CD14-positive monocyte (primary cell): ENCODE measurements at regions of chr15 and their contacts with region 1.

Region 1: DNA sequence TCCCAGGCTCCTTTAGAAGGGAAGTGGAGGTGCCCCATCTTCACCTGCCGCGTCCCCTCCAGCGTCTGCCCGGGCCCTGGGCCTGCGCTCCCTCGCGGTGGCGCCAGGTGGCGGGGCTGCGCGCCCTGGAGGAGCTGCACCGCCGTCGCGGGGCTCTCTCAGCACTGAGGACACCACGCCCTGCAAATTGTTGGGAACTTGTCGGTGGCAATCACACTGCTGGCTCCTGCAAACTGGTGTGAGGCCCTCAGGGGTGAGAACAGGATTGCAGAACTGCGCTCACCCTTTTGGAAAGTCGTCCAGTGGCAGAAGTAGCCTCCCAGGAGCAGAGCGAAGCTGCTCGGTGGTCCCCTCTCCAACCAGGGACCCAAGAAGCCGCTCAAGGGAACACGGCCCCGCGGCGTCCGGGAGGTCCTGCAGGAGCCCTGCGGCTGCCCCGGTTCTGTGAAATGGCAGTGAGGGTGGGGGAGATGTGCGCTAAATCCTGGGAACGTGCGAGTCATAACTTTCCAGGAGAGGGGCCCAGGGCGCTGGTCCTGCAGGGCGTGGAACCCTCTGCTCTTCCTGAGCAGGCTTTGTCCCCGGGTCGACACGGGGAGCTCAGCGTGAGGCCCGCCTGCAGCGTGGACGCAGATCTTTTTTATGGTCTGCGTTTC is 995 bp upstream of the LRRK1 start:
- DNase-seq: peak; percentile 71 to 75 (median 75)
- H3K4me3 ChIP-seq: peak overlapping the region; percentile 76 to 93 (median 83)
- H3K4me3 Mint-ChIP-seq: peak overlapping the region; percentile 90 to 94
- H3K27ac ChIP-seq: peak overlapping the region in 1 of 2 donors; percentile 80
- H3K27ac Mint-ChIP-seq: peak overlapping the region; percentile 18 to 89 (median 79)
- H3K4me1 ChIP-seq: peaks cover 41 to 51% of the 10 kb centered on the region in 2 donors
- H3K4me1 Mint-ChIP-seq: peaks cover 45% of the 10 kb centered on the region
- H3K27me3 ChIP-seq: no peaks in the 10 kb centered on the region
- H3K27me3 Mint-ChIP-seq: peaks cover 0 to 6% (median 2%) of the 10 kb centered on the region in 3 donors
- CTCF ChIP-seq: peak; percentile 97

Region 2: DNA sequence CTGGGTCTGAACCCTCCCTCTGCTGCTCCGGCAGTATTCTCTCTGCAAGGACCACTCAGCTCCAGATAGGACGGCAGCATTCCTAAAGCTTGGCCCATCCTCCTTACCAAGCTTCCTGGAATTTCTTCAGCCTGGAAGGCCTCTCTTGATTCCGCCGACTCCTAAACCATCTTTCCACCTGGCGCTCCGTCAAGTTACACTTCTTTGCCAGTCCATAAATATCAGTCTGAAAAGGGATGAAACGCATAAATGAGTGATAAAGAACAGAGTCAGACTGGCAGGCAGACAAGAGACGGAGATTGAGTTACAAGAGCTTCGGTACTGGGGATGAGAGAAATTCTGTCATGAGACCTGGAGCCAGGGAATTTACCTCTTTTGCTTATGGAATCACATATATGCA is 433.7 kb before region 1 on chr15:
- intact Hi-C with region 1: no loop called
- DNase-seq: no peak
- H3K4me3 ChIP-seq: no peak overlapping the region
- H3K4me3 Mint-ChIP-seq: no peak overlapping the region
- H3K27ac ChIP-seq: no peak overlapping the region
- H3K27ac Mint-ChIP-seq: no peak overlapping the region
- H3K4me1 ChIP-seq: no peaks in the 10 kb centered on the region
- H3K4me1 Mint-ChIP-seq: no peaks in the 10 kb centered on the region
- H3K27me3 ChIP-seq: peaks cover 0 to 4% of the 10 kb centered on the region in 2 donors
- H3K27me3 Mint-ChIP-seq: peaks cover 3 to 7% (median 5%) of the 10 kb centered on the region in 3 donors
- CTCF ChIP-seq: no peak

Region 3: GRCh38 chr15:100873029-100873677 is 45.0 kb before region 1 on chr15:
- intact Hi-C with region 1: no loop called
- DNase-seq: peak; percentile 72 to 87 (median 86)
- H3K4me3 ChIP-seq: no peak overlapping the region
- H3K4me3 Mint-ChIP-seq: no peak overlapping the region
- H3K27ac ChIP-seq: no peak overlapping the region
- H3K27ac Mint-ChIP-seq: peak overlapping the region in 2 of 7 donors; percentile 44 to 46
- H3K4me1 ChIP-seq: no peaks in the 10 kb centered on the region
- H3K4me1 Mint-ChIP-seq: peaks cover 5% of the 10 kb centered on the region
- H3K27me3 ChIP-seq: peaks cover 17 to 37% of the 10 kb centered on the region in 2 donors
- H3K27me3 Mint-ChIP-seq: peaks cover 31 to 36% (median 36%) of the 10 kb centered on the region in 3 donors
- CTCF ChIP-seq: peak; percentile 95

Region 4: DNA sequence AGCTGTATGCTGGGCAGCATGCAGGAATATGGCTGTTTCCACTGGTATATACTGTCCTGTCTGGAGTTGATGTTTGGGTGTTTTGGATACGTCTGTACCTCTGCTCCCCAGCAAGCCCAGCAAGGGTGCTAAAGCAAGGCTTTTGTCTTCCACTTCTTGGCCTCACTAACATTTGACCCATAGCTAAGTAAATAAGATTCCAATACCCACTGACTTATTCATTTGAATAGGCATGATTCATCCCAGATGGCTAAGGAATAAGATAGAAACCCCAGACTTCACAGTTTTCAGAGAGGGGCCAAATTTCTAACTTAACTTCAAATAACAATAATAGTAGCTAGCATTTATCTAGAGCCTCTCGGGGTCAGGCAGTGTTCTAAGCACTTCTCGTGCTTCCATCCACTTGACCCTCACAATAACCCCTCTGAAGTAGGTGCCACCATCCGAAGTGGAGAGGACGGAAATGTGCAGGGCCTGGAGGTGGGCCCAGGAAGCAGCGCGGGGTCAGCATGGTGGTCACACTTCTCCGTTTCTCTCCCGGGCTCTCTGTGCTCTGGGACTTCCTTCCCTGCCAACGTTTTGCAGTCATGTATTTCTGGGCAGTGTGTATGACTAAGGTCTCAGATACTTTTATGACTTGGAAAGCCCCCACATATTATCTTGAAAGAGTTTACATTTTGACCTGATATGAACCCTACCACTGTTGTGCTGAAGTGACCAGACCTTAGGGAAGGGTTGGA is 40.3 kb after region 1 on chr15:
- intact Hi-C with region 1: loop called in 1 of 2 experiments (anchors 5 kb)
- DNase-seq: peak; percentile 32 to 74 (median 45)
- H3K4me3 ChIP-seq: no peak overlapping the region
- H3K4me3 Mint-ChIP-seq: peak overlapping the region; percentile 20 to 69
- H3K27ac ChIP-seq: peak overlapping the region in 1 of 2 donors; percentile 68
- H3K27ac Mint-ChIP-seq: peak overlapping the region in 5 of 7 donors; percentile 35 to 82 (median 70)
- H3K4me1 ChIP-seq: peaks cover 19 to 24% of the 10 kb centered on the region in 2 donors
- H3K4me1 Mint-ChIP-seq: peaks cover 27% of the 10 kb centered on the region
- H3K27me3 ChIP-seq: no peaks in the 10 kb centered on the region
- H3K27me3 Mint-ChIP-seq: peaks cover 0 to 6% (median 0%) of the 10 kb centered on the region in 3 donors
- CTCF ChIP-seq: no peak

Region 5: GRCh38 chr15:101008158-101009139 is 90.3 kb after region 1 on chr15:
- intact Hi-C with region 1: loop called (anchors 1 to 2 kb)
- DNase-seq: peak; percentile 66 to 69 (median 69)
- H3K4me3 ChIP-seq: peak overlapping the region; percentile 33 to 74 (median 47)
- H3K4me3 Mint-ChIP-seq: peak overlapping the region; percentile 72 to 88
- H3K27ac ChIP-seq: no peak overlapping the region
- H3K27ac Mint-ChIP-seq: peak overlapping the region in 3 of 7 donors; percentile 25 to 64 (median 44)
- H3K4me1 ChIP-seq: peaks cover 19 to 21% of the 10 kb centered on the region in 2 donors
- H3K4me1 Mint-ChIP-seq: peaks cover 21% of the 10 kb centered on the region
- H3K27me3 ChIP-seq: peaks cover 0 to 5% of the 10 kb centered on the region in 2 donors
- H3K27me3 Mint-ChIP-seq: peaks cover 9 to 17% (median 15%) of the 10 kb centered on the region in 3 donors
- CTCF ChIP-seq: peak; percentile 98

Region 6: GRCh38 chr15:101251830-101252820 is 334.0 kb after region 1 on chr15 and contains the start of gene CHSY1:
- intact Hi-C with region 1: loop called (anchors 10 kb)
- DNase-seq: peak; percentile 93 to 95 (median 94)
- H3K4me3 ChIP-seq: peak within 1 kb of the TSS; percentile 87 to 96 (median 92)
- H3K4me3 Mint-ChIP-seq: peak within 1 kb of the TSS; percentile 95 to 96
- H3K27ac ChIP-seq: peak within 1 kb of the TSS; percentile 48 to 83
- H3K27ac Mint-ChIP-seq: peak within 1 kb of the TSS; percentile 84 to 92 (median 92)
- H3K4me1 ChIP-seq: peaks cover 46 to 48% of the 10 kb centered on the region in 2 donors
- H3K4me1 Mint-ChIP-seq: peaks cover 48% of the 10 kb centered on the region
- H3K27me3 ChIP-seq: no peaks in the 10 kb centered on the region
- H3K27me3 Mint-ChIP-seq: peaks cover 2 to 11% (median 7%) of the 10 kb centered on the region in 3 donors
- CTCF ChIP-seq: no peak
- polyA plus RNA-seq, gene CHSY1: 2.7 to 19.0 (median 3.0) TPM